ENCODE measurements at regions of chr10 and their contacts with region 1.

Region 1: GRCh38 chr10:16529853-16530252 is 8.2 kb upstream of the C1QL3 start:
- DNase-seq: no peak
- ATAC-seq: no peak
- H3K4me3 ChIP-seq: no peak overlapping the region
- H3K27ac ChIP-seq: no peak overlapping the region
- H3K4me1 ChIP-seq: no peaks in the 10 kb centered on the region
- CTCF ChIP-seq: no peak
- EP300 ChIP-seq: no peak
- POLR2A ChIP-seq: no peak
- RAD21 ChIP-seq: no peak

Region 2: DNA sequence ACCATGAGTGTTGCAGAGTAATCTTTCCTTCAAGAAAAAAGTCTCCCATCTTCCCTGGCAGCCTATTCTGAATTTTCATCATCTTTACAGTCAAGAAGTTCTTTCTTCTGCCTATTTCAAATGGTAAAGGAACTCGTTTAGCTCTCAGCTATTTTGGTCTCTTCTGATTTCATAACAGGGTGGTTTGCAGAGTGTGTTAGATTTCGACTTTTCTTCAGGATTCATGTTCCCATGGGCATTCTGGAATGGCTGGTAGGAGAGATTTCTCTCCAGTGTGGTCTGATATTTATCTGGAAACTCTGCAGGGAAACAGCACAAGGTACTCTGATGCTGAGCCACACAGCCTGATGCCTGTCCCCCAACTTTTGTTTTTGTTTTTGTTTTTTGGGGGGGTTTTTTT is 1047.7 kb before region 1 on chr10:
- CTCF ChIA-PET with region 1: no interaction called
- POLR2A ChIA-PET with region 1: no interaction called
- DNase-seq: no peak
- ATAC-seq: no peak
- H3K4me3 ChIP-seq: no peak overlapping the region
- H3K27ac ChIP-seq: no peak overlapping the region
- H3K4me1 ChIP-seq: no peaks in the 10 kb centered on the region
- CTCF ChIP-seq: no peak
- EP300 ChIP-seq: no peak
- POLR2A ChIP-seq: no peak
- RAD21 ChIP-seq: no peak

Region 3: DNA sequence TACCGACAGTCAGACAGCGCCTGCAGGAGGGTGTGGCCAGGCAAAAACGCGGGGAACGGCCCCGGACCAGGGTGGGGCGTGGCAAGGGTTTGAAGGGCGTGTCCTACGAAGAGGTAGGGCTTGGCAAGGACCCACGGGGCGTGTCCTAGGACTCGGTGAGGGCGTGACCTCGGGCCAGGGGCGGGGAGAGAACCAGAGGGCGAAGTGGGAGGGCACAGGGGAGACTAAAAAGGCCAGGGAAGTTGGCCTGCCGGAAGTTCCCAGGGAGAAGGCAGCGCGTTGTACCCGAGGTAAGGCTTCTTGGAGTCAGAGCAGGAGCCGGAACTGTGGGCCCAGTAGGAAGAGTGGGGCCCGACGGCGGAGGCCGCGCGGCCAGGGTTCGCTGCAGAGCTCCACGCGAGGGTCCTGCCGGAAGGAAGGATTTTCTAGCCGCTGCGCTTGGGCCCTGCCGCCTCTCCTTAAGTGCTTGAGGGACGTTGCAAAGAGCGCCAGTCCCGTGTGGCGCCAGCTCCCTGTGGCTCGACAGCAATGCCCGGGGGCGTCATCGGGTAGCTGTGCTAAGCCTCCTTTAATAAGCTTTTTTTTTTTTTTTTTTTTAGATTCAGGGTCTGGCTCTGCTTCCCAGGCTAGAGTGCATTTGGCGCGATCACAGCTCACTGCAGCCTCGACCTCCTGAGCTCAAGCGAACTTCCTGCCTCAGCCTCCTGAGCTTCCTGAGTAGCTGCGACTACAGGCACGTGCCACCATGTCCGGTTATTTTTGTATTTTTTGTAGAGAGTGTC is 92.9 kb before region 1 on chr10 and contains the start of gene PTER:
- CTCF ChIA-PET with region 1: no interaction called
- POLR2A ChIA-PET with region 1: no interaction called
- DNase-seq: peak; percentile 71 to 97
- ATAC-seq: peak; percentile 95 to 98
- H3K4me3 ChIP-seq: peak within 1 kb of the TSS; percentile 63
- H3K27ac ChIP-seq: peak within 1 kb of the TSS; percentile 84 to 89
- H3K4me1 ChIP-seq: peaks cover 44% of the 10 kb centered on the region
- CTCF ChIP-seq: no peak
- EP300 ChIP-seq: no peak
- POLR2A ChIP-seq: peak; percentile 92
- RAD21 ChIP-seq: no peak
- polyA plus RNA-seq, gene PTER: 32.9 and 34.5 TPM in 2 replicates

Region 4: DNA sequence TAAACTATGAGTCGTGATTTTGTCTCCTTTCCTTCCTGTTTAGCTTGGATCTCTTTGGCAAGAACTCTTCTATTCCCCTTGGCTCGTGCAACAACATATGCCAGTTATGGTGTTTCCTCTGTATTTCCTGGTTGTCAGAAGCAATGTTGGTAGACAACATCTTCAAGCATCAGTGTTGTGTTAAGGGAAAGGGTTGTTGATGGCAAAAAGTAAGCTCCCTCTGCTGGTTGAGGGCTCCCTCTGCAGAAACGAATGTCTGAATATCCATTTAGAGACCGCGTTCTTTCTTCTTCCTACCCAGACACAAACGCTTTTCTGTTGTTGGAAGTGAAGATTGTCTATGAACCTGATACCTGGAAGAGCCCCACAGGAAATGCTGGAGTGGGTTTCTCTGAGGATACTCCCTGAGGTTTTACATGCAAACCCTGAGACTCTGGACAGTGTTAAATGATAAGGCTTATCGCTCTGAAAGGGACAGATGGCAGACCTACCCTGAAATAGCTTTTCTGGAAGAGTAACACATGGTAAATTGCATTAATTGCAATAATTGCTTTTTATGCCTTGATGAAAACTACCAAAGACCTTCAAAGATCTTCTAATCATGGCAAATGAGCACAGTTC is 15.4 kb after region 1 on chr10:
- CTCF ChIA-PET with region 1: interaction called, 10 read pairs
- POLR2A ChIA-PET with region 1: no interaction called
- DNase-seq: peak; percentile 54 to 65
- ATAC-seq: peak; percentile 88
- H3K4me3 ChIP-seq: no peak overlapping the region
- H3K27ac ChIP-seq: no peak overlapping the region
- H3K4me1 ChIP-seq: no peaks in the 10 kb centered on the region
- CTCF ChIP-seq: peak; percentile 68
- EP300 ChIP-seq: no peak
- POLR2A ChIP-seq: no peak
- RAD21 ChIP-seq: peak; percentile 63 to 71